Activated naive CD8-positive, alpha-beta T cell treated with anti-CD3 and anti-CD28 coated beads, Interleukin-2, amount 10 ng/mL, durations not matched to agents 7 days and 5 days (primary cell): ENCODE measurements at regions of chr16 and their contacts with region 1.

Region 1: DNA sequence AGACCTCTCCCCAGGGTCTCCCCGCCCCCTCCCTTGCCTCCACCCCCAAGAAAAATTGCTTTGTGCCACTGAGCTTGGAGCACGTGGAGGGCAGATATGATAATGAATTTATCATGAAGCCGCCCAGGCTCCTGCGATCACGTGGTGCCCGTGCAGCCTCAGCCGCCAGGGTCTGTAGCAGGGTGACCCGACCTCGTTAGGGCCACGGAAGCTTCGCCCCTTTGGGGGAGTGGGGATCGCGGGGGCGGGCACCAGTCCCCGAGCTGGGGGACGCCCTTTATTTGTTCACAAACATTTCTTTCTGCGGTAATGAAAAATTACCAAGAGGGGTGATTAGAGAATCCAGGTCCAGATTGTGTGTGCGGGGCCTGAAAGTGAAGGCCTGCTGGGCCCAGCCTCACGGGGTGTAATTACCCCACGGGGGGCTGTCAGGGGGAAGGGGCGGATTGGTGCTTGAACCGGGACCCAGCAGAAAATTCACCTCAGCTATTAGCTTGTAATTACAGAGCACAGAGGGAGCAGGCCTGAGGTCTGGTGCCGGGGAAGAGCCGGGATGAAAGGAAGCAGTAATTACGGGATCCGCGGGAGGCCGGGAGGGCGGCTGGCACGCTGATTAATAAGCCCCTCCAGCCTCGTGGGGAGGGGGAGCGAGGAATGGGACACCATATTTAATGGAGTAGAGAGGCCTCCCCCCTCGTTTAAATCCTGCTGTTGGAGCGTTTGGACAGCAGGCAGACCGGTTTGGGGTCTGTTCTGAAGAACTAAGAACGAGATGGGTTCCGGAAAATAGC is 13.3 kb downstream of the GSE1 start:
- DNase-seq: no peak
- ATAC-seq: no peak
- H3K4me3 Mint-ChIP-seq: peak overlapping the region; percentile 4
- H3K27ac Mint-ChIP-seq: no peak overlapping the region
- H3K4me1 Mint-ChIP-seq: peaks cover 22% of the 10 kb centered on the region
- H3K27me3 Mint-ChIP-seq: no peaks in the 10 kb centered on the region

Region 2: DNA sequence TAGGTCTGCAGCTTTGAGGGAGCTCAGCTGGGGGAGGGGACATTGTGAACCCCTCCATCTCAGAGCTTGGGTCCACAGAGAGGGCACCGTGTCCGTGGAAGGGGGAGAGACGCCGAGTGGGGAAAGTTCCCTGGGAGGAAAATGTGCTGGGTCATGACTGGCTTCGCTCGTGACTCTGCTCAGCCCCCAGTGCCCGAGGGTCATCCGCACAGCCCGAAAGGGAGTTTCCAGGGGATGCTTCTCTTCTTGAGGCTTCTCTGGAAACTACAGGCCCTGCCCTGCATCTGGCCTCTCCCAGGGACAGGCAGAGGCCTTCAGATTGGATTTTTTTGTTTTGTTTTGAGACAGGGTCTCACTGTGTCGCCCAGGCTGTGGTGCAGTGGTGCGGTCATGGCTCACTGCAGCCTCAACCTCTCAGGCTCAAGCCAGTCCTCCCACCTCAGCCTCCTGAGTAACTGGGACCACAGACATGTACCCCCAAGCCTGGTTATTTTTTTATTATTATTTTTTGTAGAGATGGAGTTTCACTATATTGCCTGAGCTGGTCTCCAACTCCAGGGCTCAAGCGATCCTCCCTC is 23.1 kb before region 1 on chr16:
- POLR2A ChIA-PET with region 1: no interaction called
- DNase-seq: no peak
- ATAC-seq: no peak
- H3K4me3 Mint-ChIP-seq: no peak overlapping the region
- H3K27ac Mint-ChIP-seq: no peak overlapping the region
- H3K4me1 Mint-ChIP-seq: peaks cover 12% of the 10 kb centered on the region
- H3K27me3 Mint-ChIP-seq: peaks cover 2% of the 10 kb centered on the region

Region 3: DNA sequence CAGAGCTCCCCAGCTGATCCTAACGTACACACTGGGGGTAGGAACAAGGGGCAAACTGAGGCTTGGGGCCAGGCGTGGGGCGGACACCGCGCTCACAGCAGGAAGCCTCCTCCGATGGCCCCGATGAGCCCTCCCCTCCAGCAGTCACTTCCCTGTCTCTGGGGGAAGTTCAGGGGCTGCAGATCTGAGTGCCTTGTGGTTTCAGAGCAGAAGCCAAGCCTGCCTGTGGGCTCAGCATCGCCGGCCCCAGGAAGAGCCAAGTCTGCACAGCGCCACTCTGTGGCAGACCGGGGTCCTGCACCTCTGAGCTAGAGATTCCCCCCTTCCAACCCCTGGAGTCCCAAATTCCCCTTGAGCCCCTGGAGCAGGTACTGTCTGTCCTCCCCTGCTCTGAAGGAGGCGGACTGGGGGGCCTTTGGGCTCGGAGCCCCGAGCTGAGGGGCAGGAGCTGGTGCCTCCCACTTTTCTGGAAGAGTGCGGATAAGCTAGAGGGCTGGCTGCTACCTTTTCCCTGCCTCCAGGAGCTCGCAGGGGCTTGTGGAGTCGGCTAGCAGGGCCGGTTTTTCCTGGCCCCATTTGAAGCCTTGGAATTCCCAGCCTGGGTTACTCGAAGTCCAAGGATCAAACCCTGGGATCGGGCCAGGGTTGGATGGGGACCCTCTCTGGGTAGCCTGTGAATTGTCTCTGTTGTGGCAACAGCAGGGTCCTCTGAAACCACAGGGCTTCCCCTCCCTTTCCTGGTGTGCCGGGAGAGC is 10.4 kb before region 1 on chr16:
- POLR2A ChIA-PET with region 1: interaction called, 14 read pairs
- DNase-seq: peak; percentile 89
- ATAC-seq: peak; percentile 63
- H3K4me3 Mint-ChIP-seq: peak overlapping the region; percentile 84
- H3K27ac Mint-ChIP-seq: peak overlapping the region; percentile 77
- H3K4me1 Mint-ChIP-seq: peaks cover 22% of the 10 kb centered on the region
- H3K27me3 Mint-ChIP-seq: no peaks in the 10 kb centered on the region